Esophagus muscularis mucosa (tissue), 4 donors: ENCODE measurements at regions of chr1 and their contacts with region 1.

Region 1: DNA sequence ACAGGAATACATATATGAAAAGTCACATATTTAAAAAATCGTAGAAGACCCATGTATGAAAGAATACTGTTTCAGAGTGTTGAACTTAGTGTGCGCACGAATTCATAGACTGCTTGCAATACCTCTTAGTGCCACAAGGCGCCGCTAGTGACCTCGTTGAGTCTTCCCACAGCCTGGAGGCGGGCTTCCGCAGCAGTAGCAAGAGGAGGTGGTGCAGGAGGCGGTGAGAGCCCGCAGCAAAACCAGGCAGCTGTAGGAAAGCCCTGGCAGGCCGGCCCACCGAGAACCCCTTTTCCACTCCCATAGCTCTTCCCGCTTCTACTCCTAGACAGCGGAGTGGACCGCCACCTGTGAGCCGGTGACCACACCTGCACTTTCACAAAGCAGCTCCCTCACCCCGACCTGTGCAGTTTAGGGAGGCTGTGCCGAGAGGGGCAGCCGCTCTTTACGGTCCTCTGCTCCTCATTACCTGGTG is 23.5 kb downstream of the MTARC1 start:
- DNase-seq: no peak
- H3K4me3 ChIP-seq: peak overlapping the region in 1 of 4 donors; percentile 37
- H3K27ac ChIP-seq: no peak overlapping the region
- H3K4me1 ChIP-seq: peaks cover 0 to 25% (median 19%) of the 10 kb centered on the region in 4 donors
- H3K27me3 ChIP-seq: no peaks in the 10 kb centered on the region
- CTCF ChIP-seq: peak; percentile 95 to 97 (median 96)
- EP300 ChIP-seq: no peak
- POLR2A ChIP-seq: no peak

Region 2: DNA sequence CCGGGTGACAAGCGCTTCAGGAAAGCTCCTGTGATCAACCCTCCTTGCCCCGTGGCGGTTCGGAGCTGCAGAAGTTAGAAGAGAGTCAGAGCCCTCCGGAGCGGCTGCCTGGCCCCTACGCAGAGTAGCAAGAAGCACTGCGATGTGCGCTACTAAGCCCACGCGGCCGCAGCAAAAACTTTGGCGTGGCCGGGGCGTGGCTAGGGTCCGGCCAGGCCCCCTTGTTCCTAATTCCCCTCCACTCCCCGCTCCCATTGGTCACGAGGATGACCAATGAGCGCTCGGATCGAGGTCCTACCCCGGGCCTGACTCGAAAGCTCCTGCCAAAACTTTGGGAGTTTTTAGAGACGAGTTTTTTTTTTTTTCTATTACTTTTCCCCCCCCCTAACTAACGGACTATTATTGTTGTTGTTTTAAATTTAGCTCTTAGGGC is 68.9 kb after region 1 on chr1 and contains the start of gene HLX:
- intact Hi-C with region 1: loop called (anchors 2 kb)
- DNase-seq: peak; percentile 98
- H3K4me3 ChIP-seq: peak within 1 kb of the TSS; percentile 73 to 99 (median 91)
- H3K27ac ChIP-seq: peak within 1 kb of the TSS; percentile 90 to 99 (median 96)
- H3K4me1 ChIP-seq: peaks cover 51 to 64% (median 56%) of the 10 kb centered on the region in 4 donors
- H3K27me3 ChIP-seq: no peaks in the 10 kb centered on the region
- CTCF ChIP-seq: peak in 1 of 3 experiments; percentile 1
- EP300 ChIP-seq: no peak
- POLR2A ChIP-seq: peak; percentile 58
- total RNA-seq, gene HLX: 8.7 to 27.3 (median 16.1) TPM

Region 3: GRCh38 chr1:220908757-220909156 is 98.5 kb after region 1 on chr1:
- intact Hi-C with region 1: no loop called
- DNase-seq: peak; percentile 21
- H3K4me3 ChIP-seq: no peak overlapping the region
- H3K27ac ChIP-seq: no peak overlapping the region
- H3K4me1 ChIP-seq: no peaks in the 10 kb centered on the region
- H3K27me3 ChIP-seq: no peaks in the 10 kb centered on the region
- CTCF ChIP-seq: peak; percentile 45 to 65 (median 60)
- EP300 ChIP-seq: no peak
- POLR2A ChIP-seq: no peak

Region 4: GRCh38 chr1:220943319-220943996 is 133.2 kb after region 1 on chr1:
- intact Hi-C with region 1: no loop called
- DNase-seq: no peak
- H3K4me3 ChIP-seq: no peak overlapping the region
- H3K27ac ChIP-seq: no peak overlapping the region
- H3K4me1 ChIP-seq: peaks cover 0 to 9% (median 4%) of the 10 kb centered on the region in 4 donors
- H3K27me3 ChIP-seq: no peaks in the 10 kb centered on the region
- CTCF ChIP-seq: no peak
- EP300 ChIP-seq: no peak
- POLR2A ChIP-seq: no peak

Region 5: GRCh38 chr1:221035680-221036153 is 225.5 kb after region 1 on chr1:
- intact Hi-C with region 1: loop called (anchors 10 kb)
- DNase-seq: no peak
- H3K4me3 ChIP-seq: no peak overlapping the region
- H3K27ac ChIP-seq: no peak overlapping the region
- H3K4me1 ChIP-seq: peaks cover 22 to 50% (median 41%) of the 10 kb centered on the region in 4 donors
- H3K27me3 ChIP-seq: no peaks in the 10 kb centered on the region
- CTCF ChIP-seq: no peak
- EP300 ChIP-seq: no peak
- POLR2A ChIP-seq: no peak

Region 6: DNA sequence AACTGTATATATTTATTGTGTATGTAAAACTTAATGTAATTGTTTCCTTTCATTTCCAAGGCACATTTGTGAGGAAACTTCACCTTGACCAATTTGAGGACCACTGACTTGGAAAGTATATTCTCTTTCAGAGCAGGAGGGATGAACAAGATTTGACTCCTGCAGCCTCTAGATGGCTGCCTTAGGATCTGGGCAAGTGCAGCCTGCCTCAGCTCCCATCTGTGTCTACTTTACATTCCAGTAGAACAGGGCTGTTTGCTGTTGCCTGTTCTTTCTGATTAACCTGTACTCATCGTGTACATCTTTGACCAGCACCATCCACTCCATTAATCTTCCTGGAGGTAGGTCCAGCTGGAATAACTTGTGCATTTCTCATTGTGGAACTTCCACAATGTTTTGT is 381.8 kb after region 1 on chr1:
- intact Hi-C with region 1: no loop called
- DNase-seq: no peak
- H3K4me3 ChIP-seq: no peak overlapping the region
- H3K27ac ChIP-seq: no peak overlapping the region
- H3K4me1 ChIP-seq: no peaks in the 10 kb centered on the region
- H3K27me3 ChIP-seq: no peaks in the 10 kb centered on the region
- CTCF ChIP-seq: no peak
- EP300 ChIP-seq: no peak
- POLR2A ChIP-seq: no peak

Region 7: GRCh38 chr1:221435504-221435904 is 625.3 kb after region 1 on chr1:
- intact Hi-C with region 1: loop called (anchors 5 kb)
- DNase-seq: no peak
- H3K4me3 ChIP-seq: no peak overlapping the region
- H3K27ac ChIP-seq: peak overlapping the region; percentile 3 to 48 (median 23)
- H3K4me1 ChIP-seq: peaks cover 12 to 26% (median 24%) of the 10 kb centered on the region in 4 donors
- H3K27me3 ChIP-seq: no peaks in the 10 kb centered on the region
- CTCF ChIP-seq: peak; percentile 93 to 99 (median 95)
- EP300 ChIP-seq: no peak
- POLR2A ChIP-seq: no peak